ENCODE measurements at regions of chr10 and their contacts with region 1.

Region 1: GRCh38 chr10:98285416-98285815 is 17.4 kb upstream of the LOXL4 start:
- DNase-seq: no peak
- ATAC-seq: peak in 2 of 8 donors; percentile 46 to 55
- H3K4me3 ChIP-seq: no peak overlapping the region
- H3K27ac ChIP-seq: no peak overlapping the region
- H3K4me1 ChIP-seq: peaks cover 0 to 5% (median 0%) of the 10 kb centered on the region in 9 donors
- H3K27me3 ChIP-seq: peaks cover 0 to 14% (median 0%) of the 10 kb centered on the region in 7 donors
- CTCF ChIP-seq: no peak

Region 2: DNA sequence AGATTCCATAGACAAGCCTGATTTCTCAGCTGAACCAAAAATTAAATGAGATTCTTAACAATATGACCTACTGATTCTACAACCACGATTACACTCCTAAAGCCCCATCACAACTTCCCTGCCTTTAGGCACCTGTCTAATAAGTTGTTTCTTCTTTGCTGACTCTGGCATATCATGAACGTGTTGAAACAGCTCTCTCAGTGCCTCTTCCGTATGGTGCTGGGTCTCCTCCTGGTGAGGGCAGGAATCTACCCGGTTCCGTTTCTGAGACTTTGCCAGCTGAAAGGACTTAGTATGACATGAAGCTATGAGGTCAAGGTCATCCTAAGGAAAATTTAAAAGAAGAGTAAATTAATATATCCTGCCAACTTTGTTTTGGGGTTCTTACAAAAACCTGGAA is 1041.6 kb before region 1 on chr10:
- intact Hi-C with region 1: loop called in 1 of 10 experiments (anchors 10 kb)
- DNase-seq: no peak
- ATAC-seq: no peak
- H3K4me3 ChIP-seq: no peak overlapping the region
- H3K27ac ChIP-seq: no peak overlapping the region
- H3K4me1 ChIP-seq: peaks cover 0 to 10% (median 0%) of the 10 kb centered on the region in 9 donors
- H3K27me3 ChIP-seq: no peaks in the 10 kb centered on the region
- CTCF ChIP-seq: no peak

Region 3: DNA sequence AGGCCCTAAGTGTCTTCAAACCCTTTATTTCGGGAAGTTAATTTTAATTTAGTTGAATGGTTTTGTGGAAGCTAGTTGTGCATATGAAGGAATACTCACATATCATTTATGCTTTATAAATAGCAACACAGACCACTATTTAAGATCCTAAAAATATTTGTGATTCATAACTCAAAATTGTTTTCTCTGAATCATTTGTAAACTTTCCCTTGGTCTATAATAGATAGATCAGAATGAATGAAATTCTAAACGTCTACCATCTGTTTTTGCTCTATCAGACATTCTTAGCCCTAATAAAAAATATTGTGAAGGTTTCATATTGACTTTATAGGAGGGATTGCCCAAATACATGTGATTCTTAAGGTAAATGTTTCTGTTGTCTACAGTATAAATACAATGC is 60.9 kb before region 1 on chr10:
- intact Hi-C with region 1: no loop called
- DNase-seq: no peak
- ATAC-seq: no peak
- H3K4me3 ChIP-seq: no peak overlapping the region
- H3K27ac ChIP-seq: no peak overlapping the region
- H3K4me1 ChIP-seq: peaks cover 0 to 22% (median 18%) of the 10 kb centered on the region in 9 donors
- H3K27me3 ChIP-seq: no peaks in the 10 kb centered on the region
- CTCF ChIP-seq: no peak

Region 4: GRCh38 chr10:98910048-98910447 is 624.6 kb after region 1 on chr10:
- intact Hi-C with region 1: no loop called
- DNase-seq: no peak
- ATAC-seq: peak in 1 of 8 donors; percentile 47
- H3K4me3 ChIP-seq: no peak overlapping the region
- H3K27ac ChIP-seq: no peak overlapping the region
- H3K4me1 ChIP-seq: no peaks in the 10 kb centered on the region
- H3K27me3 ChIP-seq: peaks cover 0 to 5% (median 0%) of the 10 kb centered on the region in 7 donors
- CTCF ChIP-seq: no peak